ENCODE measurements at regions of chr1 and their contacts with region 1.

Region 1: GRCh38 chr1:107963601-107964335 is 1.2 kb downstream of the VAV3 start:
- DNase-seq: peak; percentile 31
- H3K4me3 Mint-ChIP-seq: peak overlapping the region; percentile 90
- H3K27ac Mint-ChIP-seq: peak overlapping the region; percentile 84
- H3K4me1 Mint-ChIP-seq: peaks cover 28% of the 10 kb centered on the region
- H3K27me3 Mint-ChIP-seq: peaks cover 6% of the 10 kb centered on the region

Region 2: DNA sequence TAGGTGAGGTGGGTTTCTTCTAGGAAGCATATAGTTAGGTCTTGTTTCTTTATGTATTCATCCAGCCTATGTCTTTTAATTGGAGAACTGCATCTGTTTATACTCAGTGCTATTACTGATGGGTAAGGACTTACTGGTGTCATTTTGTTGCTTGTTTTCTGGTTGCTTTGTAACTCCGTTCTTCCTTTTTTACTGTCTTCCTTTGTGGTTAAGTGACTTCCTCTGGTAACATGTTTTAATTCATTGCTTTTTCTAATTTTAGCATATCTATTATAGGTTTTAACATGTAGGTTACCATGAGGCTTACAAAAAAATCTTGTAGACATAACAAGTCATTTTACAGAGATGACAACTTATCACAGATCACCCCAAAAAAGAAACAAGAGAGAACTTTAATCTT is 159.6 kb before region 1 on chr1:
- intact Hi-C with region 1: loop called (anchors 5 kb)
- DNase-seq: no peak
- H3K4me3 Mint-ChIP-seq: peak overlapping the region; percentile 8
- H3K27ac Mint-ChIP-seq: no peak overlapping the region
- H3K4me1 Mint-ChIP-seq: peaks cover 33% of the 10 kb centered on the region
- H3K27me3 Mint-ChIP-seq: peaks cover 4% of the 10 kb centered on the region

Region 3: DNA sequence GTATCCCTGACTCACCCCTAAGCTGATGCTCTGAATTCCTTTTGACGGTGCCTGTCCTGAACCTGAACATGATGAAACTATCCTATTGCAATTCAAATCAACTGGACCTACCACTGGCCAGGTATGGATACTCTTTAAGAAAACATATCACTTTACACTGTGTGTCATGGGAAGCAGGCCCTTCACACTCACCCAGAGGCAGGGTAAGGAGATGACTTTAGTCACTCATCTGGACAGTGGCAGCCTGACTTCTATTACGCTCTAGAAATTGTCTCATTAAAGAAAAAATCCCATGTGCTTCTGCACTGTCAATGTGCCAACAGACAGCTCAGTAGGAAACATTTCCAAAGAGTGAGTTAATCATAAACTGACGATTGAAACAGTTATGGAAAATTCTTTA is 93.1 kb before region 1 on chr1:
- intact Hi-C with region 1: loop called (anchors 5 kb)
- DNase-seq: no peak
- H3K4me3 Mint-ChIP-seq: no peak overlapping the region
- H3K27ac Mint-ChIP-seq: no peak overlapping the region
- H3K4me1 Mint-ChIP-seq: peaks cover 10% of the 10 kb centered on the region
- H3K27me3 Mint-ChIP-seq: no peaks in the 10 kb centered on the region

Region 4: GRCh38 chr1:107949467-107950253 is 14.1 kb before region 1 on chr1:
- intact Hi-C with region 1: no loop called
- DNase-seq: no peak
- H3K4me3 Mint-ChIP-seq: no peak overlapping the region
- H3K27ac Mint-ChIP-seq: no peak overlapping the region
- H3K4me1 Mint-ChIP-seq: peaks cover 7% of the 10 kb centered on the region
- H3K27me3 Mint-ChIP-seq: no peaks in the 10 kb centered on the region

Region 5: GRCh38 chr1:108079440-108080025 is 115.8 kb after region 1 on chr1:
- intact Hi-C with region 1: loop called (anchors 2 kb)
- DNase-seq: peak; percentile 24
- H3K4me3 Mint-ChIP-seq: peak overlapping the region; percentile 32
- H3K27ac Mint-ChIP-seq: peak overlapping the region; percentile 56
- H3K4me1 Mint-ChIP-seq: peaks cover 64% of the 10 kb centered on the region
- H3K27me3 Mint-ChIP-seq: no peaks in the 10 kb centered on the region

Region 6: DNA sequence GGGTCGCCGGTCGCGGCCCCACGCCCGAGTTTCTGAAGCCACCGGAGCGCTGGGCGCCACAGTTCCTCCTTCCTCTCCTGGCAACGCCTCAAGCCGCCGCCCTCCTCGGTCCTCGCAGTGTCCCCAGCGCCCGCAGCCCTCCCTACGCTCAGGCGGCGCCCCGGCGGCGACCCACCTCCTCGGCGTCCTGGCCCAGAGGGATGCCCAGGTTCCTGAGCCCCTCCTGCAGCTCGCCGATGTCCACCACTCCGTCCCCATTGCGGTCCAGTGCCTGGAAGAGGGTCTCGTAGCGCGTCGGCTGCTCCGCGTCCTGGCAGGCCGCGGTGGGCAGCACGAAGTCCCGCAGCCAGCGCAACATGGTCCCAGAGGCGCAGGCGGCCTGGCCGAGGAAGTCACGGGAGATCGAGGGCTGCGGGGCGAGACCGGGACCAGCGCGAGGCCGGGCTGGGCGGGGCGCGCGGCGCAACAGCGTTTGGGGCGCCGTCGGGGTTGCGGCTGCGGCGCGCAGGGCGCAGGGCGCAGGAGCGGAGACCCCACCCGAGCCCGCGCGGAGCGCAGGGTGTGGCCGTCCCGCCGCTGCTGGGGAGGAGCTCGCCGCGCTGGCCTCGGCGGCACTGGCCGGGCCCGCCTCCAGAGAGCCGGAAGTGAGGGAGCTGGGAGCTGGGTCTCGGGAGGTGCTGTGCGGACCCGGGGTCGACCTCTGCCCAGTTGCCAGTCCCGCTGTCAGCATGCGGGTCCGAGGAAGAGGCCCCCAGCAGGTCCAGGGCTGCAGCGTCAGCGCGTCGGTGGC is 236.2 kb after region 1 on chr1 and contains the start of gene SLC25A24:
- intact Hi-C with region 1: loop called (anchors 5 kb)
- DNase-seq: peak; percentile 83
- H3K4me3 Mint-ChIP-seq: peak within 1 kb of the TSS; percentile 91
- H3K27ac Mint-ChIP-seq: peak within 1 kb of the TSS; percentile 78
- H3K4me1 Mint-ChIP-seq: peaks cover 38% of the 10 kb centered on the region
- H3K27me3 Mint-ChIP-seq: peaks cover 7% of the 10 kb centered on the region
- total RNA-seq, gene SLC25A24: 14.6 and 16.6 TPM in 2 replicates